HEK293T (cell line): ENCODE measurements at regions of chr1 and their contacts with region 1.

Region 1: GRCh38 chr1:93328809-93329760 is 16.6 kb upstream of the DR1 start:
- DNase-seq: no peak

Region 2: DNA sequence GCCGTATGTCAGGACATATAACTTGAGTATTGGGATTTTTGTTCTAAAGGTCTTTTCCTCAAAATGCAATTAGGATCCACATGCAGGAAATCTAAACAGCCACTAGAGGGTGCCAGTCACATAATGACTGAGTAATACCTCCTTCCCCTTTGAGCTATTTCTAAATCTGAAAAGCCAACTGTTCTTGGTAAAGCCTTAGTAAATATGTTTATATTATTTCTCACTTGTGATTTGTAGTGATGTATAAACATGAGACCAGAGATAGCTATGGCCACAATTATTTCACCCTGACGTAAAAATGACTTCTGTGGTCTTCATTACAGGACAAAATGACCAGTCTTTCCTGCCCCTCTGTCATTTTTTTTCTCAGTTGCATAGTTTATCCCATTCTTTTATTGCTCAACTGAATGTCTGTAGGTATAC is 24.4 kb before region 1 on chr1:
- CTCF ChIA-PET with region 1: interaction called, 10 read pairs
- POLR2A ChIA-PET with region 1: no interaction called
- DNase-seq: peak; percentile 68

Region 3: DNA sequence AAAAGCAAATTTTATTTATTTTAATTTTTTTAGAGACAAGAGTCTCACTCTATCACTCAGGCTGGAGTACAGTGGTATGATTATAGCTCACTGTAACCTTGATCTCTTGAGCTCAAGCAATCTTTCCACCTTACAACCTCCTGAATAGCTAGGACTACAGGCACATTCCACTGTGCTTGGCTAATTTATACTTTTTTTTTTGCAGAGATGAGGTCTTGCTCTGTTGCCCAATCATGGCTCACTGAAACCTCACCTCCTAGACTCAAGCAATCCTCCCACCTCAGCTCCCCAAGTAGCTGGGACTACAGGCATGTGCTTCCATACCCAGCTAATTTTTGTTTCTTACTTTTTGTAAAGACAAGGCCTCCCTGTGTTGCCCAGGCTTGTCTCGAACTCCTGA is 66.1 kb after region 1 on chr1:
- CTCF ChIA-PET with region 1: no interaction called
- POLR2A ChIA-PET with region 1: no interaction called
- DNase-seq: no peak